ENCODE measurements at regions of chr14 and their contacts with region 1.

Region 1: GRCh38 chr14:55129428-55130195 is 560 bp downstream of the LGALS3 start:
- DNase-seq: peak; percentile 62 to 79
- H3K4me3 ChIP-seq: peak overlapping the region; percentile 81 to 93 (median 93)
- H3K27ac ChIP-seq: peak overlapping the region; percentile 99
- H3K4me1 ChIP-seq: peaks cover 0 to 16% of the 10 kb centered on the region in 2 donors
- H3K27me3 ChIP-seq: no peaks in the 10 kb centered on the region
- CTCF ChIP-seq: no peak
- POLR2A ChIP-seq: no peak

Region 2: GRCh38 chr14:55094321-55095157 is 35.1 kb before region 1 on chr14:
- intact Hi-C with region 1: loop called (anchors 5 kb)
- DNase-seq: no peak
- H3K4me3 ChIP-seq: no peak overlapping the region
- H3K27ac ChIP-seq: peak overlapping the region in 1 of 2 donors; percentile 42
- H3K4me1 ChIP-seq: no peaks in the 10 kb centered on the region
- H3K27me3 ChIP-seq: no peaks in the 10 kb centered on the region
- CTCF ChIP-seq: no peak
- POLR2A ChIP-seq: no peak

Region 3: GRCh38 chr14:56081139-56081538 is 951.5 kb after region 1 on chr14:
- intact Hi-C with region 1: no loop called
- DNase-seq: no peak
- H3K4me3 ChIP-seq: no peak overlapping the region
- H3K27ac ChIP-seq: no peak overlapping the region
- H3K4me1 ChIP-seq: no peaks in the 10 kb centered on the region
- H3K27me3 ChIP-seq: no peaks in the 10 kb centered on the region
- CTCF ChIP-seq: no peak
- POLR2A ChIP-seq: no peak